Spleen (tissue), 13 donors: ENCODE measurements at regions of chr4 and their contacts with region 1.

Region 1: GRCh38 chr4:176319704-176320339 is at the start of gene SPCS3:
- DNase-seq: peak; percentile 99
- H3K4me3 ChIP-seq: peak within 1 kb of the TSS; percentile 72 to 99 (median 94)
- H3K27ac ChIP-seq: peak within 1 kb of the TSS; percentile 93 to 100 (median 98)
- H3K4me1 ChIP-seq: peaks cover 14 to 67% (median 51%) of the 10 kb centered on the region in 6 donors
- H3K27me3 ChIP-seq: no peaks in the 10 kb centered on the region
- CTCF ChIP-seq: no peak
- POLR2A ChIP-seq: peak in 2 of 3 donors; percentile 76 to 85
- total RNA-seq, gene SPCS3: 117 to 164 (median 144) TPM

Region 2: GRCh38 chr4:176195184-176195978 is 124.4 kb before region 1 on chr4 and contains the start of gene SPATA4:
- intact Hi-C with region 1: loop called (anchors 10 kb)
- DNase-seq: peak; percentile 99
- H3K4me3 ChIP-seq: peak within 1 kb of the TSS; percentile 49 to 80 (median 54)
- H3K27ac ChIP-seq: peak within 1 kb of the TSS; percentile 37 to 81 (median 62)
- H3K4me1 ChIP-seq: peaks cover 0 to 13% (median 10%) of the 10 kb centered on the region in 6 donors
- H3K27me3 ChIP-seq: peaks cover 0 to 32% (median 0%) of the 10 kb centered on the region in 7 donors
- CTCF ChIP-seq: peak in 1 of 11 experiments; percentile 17
- POLR2A ChIP-seq: no peak
- total RNA-seq, gene SPATA4: not detected